SK-N-SH (cell line): ENCODE measurements at regions of chr14 and their contacts with region 1.

Region 1: GRCh38 chr14:99393047-99393655 is 87.5 kb downstream of the SETD3 start:
- DNase-seq: peak; percentile 64
- H3K4me3 ChIP-seq: no peak overlapping the region
- H3K27ac ChIP-seq: no peak overlapping the region
- H3K4me1 ChIP-seq: no peaks in the 10 kb centered on the region
- H3K27me3 ChIP-seq: no peaks in the 10 kb centered on the region
- CTCF ChIP-seq: peak; percentile 68
- EP300 ChIP-seq: no peak
- RAD21 ChIP-seq: peak; percentile 26; the same call in 1 of the 2 replicates

Region 2: DNA sequence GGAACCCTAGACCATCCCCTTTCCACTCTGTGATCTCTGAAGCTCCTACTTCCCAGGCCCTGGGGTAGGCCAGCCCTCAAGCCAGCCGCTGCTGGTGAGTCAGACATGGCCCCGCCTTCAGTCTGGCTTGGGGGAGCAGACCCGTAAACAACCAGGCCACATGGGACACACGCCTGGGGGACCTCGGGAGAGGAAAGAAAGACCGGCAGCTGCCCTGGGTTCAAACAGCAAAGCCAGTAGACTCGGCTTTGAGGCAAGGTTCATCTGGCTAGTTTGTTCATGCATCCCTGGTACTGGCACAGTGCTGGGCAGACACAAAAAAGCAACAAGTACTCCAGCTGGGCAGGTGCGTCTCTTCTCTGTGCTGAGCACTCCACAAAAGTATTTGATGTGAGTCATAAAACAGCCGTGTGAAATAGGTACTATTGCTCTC is 14.4 kb before region 1 on chr14:
- CTCF ChIA-PET with region 1: interaction called, 10 read pairs
- POLR2A ChIA-PET with region 1: no interaction called
- DNase-seq: no peak
- H3K4me3 ChIP-seq: no peak overlapping the region
- H3K27ac ChIP-seq: no peak overlapping the region
- H3K4me1 ChIP-seq: no peaks in the 10 kb centered on the region
- H3K27me3 ChIP-seq: peaks cover 11% of the 10 kb centered on the region
- CTCF ChIP-seq: no peak
- EP300 ChIP-seq: no peak
- RAD21 ChIP-seq: no peak

Region 3: DNA sequence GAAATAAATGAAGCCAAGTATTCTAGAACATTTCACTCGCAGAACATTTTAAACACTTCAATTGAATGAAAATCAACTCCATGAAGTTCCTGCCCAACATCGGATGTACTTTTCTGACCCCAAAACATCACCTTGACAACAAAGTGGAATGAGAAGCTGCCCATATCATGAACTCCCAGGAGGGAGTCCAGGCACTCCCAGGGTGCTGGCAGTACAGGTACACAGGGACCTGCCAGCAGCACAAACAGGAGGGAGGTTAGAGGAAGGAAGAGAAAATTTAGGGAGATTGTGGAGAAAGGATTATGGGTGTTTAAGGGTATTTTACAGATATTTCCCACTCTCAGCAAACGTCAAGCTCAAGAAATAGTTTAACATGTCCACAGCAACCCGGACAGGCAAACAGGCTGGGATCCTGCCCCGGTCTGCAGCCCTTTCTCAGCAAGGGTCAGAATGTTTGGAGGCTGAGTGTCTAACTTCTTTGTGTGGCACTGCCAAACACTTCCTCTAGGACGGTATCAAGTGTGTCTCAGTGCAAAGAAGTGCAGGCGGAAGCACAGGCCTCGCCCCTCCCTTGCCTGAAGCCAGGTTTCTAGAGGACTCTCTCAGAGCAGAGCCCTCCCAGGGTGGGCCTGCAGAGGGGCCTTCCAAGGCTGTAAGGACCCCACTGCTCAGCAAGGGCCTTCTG is 15.3 kb after region 1 on chr14:
- CTCF ChIA-PET with region 1: interaction called, 64 read pairs
- POLR2A ChIA-PET with region 1: no interaction called
- DNase-seq: no peak
- H3K4me3 ChIP-seq: no peak overlapping the region
- H3K27ac ChIP-seq: no peak overlapping the region
- H3K4me1 ChIP-seq: no peaks in the 10 kb centered on the region; a peak in 1 of 4 replicates
- H3K27me3 ChIP-seq: no peaks in the 10 kb centered on the region
- CTCF ChIP-seq: no peak
- EP300 ChIP-seq: no peak
- RAD21 ChIP-seq: no peak